PC-9 (cell line): ENCODE measurements at regions of chr14 and their contacts with region 1.

Region 1: DNA sequence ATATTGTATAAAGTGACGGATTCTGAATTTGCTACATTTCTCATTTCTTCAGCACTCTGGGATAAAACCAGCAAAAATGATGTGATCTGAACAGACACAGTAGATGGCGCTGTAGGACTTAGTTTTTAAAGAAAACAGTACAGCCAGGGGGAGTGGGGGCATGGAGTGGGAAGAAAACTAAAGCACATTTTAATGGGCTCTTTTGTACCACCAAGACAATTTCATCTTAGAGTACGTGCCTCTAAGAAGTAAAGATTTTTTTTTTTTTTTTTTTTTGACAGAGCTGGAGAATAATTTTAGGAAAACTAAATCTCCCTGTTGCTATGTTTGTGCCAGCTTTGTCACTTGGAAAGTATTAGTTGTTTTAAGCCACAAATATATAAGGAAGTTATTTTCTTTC is 124.4 kb downstream of the RAD51B start:
- DNase-seq: peak; percentile 54 to 67
- H3K4me3 ChIP-seq: no peak overlapping the region
- H3K27ac ChIP-seq: peak overlapping the region; percentile 37
- H3K4me1 ChIP-seq: peaks cover 43% of the 10 kb centered on the region
- H3K27me3 ChIP-seq: no peaks in the 10 kb centered on the region
- CTCF ChIP-seq: peak; percentile 91

Region 2: DNA sequence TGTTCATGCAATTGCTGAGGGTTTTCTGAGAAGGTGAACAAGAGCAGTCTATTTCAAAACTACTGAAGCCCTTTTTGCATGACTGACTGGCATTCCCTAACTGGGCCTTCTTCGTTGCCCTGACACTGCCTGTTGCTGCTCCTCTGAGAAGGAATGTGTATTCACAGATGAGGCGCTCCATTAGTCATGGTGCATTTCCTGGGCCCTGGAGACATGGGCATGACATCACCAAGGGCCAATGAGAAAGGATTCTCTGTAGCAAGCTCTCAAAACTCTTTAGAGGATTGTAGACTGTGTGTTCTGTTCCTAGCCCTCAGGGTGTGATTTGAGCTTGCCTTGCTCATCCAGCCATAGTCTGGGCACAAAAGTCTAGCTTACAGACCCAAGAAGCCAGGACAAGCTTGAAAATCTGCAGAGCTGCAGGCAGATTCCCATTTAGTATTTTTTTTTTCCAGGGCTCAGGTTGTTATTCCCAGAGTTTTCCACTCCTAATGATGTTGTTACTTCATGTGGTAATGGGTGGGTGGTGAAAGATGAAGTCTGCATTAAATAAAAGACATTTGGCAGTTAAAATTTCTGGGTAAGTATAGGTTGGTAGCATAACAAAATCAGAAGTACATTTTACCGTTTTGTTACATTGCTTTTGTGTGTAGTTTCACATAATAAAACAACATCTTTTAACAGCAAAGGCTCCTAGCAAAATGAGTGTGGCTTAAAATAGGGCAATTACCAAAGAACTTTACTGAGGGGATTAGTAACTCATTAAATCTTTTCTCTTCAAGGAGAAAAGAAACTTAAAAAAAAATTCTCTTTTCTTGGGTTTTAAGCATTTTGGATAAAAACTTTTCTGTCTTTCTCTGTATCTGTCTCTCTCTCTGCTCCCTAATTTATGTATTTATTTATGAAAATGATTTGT is 194.0 kb after region 1 on chr14:
- CTCF ChIA-PET with region 1: no interaction called
- POLR2A ChIA-PET with region 1: no interaction called
- intact Hi-C with region 1: loop called (anchors 1 kb)
- DNase-seq: peak; percentile 88 to 92
- H3K4me3 ChIP-seq: no peak overlapping the region
- H3K27ac ChIP-seq: peak overlapping the region; percentile 57
- H3K4me1 ChIP-seq: peaks cover 58% of the 10 kb centered on the region
- H3K27me3 ChIP-seq: no peaks in the 10 kb centered on the region
- CTCF ChIP-seq: no peak

Region 3: GRCh38 chr14:68278581-68279436 is 334.9 kb after region 1 on chr14:
- CTCF ChIA-PET with region 1: interaction called, 10 read pairs
- POLR2A ChIA-PET with region 1: no interaction called
- intact Hi-C with region 1: no loop called
- DNase-seq: peak in 1 of 2 experiments; percentile 15
- H3K4me3 ChIP-seq: no peak overlapping the region
- H3K27ac ChIP-seq: peak overlapping the region; percentile 51
- H3K4me1 ChIP-seq: peaks cover 21% of the 10 kb centered on the region
- H3K27me3 ChIP-seq: no peaks in the 10 kb centered on the region
- CTCF ChIP-seq: no peak

Region 4: DNA sequence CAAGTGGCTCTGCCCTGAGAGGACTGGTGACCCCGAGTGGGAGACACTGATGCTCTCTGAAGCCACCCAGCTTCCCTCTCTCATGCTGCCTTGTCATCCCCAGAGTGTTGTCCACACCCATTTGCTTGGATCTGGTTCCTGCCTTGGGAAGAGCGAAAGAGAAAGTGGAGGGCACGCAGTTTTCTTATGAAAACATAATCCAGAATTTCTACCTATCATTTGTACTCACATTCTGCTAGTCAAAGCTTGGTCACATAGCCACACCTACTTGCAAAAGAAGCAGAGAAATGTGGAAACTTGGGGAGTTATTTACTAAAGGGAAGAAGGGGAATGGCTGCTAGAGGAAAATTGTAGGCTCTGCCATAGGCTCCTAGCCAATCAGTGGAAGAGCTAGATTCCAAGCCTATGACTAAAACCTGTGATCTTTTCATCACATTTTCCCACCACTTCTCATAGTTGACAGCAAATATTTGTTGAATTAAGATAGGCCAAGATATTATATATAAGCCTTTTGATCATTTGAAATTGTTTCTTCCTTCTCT is 522.6 kb after region 1 on chr14:
- CTCF ChIA-PET with region 1: interaction called, 3 read pairs
- POLR2A ChIA-PET with region 1: no interaction called
- intact Hi-C with region 1: loop called (anchors 5 kb)
- DNase-seq: peak; percentile 65 to 100
- H3K4me3 ChIP-seq: peak overlapping the region; percentile 23; the same call in 1 of the 2 replicates
- H3K27ac ChIP-seq: peak overlapping the region; percentile 96
- H3K4me1 ChIP-seq: peaks cover 95% of the 10 kb centered on the region
- H3K27me3 ChIP-seq: no peaks in the 10 kb centered on the region
- CTCF ChIP-seq: no peak

Region 5: DNA sequence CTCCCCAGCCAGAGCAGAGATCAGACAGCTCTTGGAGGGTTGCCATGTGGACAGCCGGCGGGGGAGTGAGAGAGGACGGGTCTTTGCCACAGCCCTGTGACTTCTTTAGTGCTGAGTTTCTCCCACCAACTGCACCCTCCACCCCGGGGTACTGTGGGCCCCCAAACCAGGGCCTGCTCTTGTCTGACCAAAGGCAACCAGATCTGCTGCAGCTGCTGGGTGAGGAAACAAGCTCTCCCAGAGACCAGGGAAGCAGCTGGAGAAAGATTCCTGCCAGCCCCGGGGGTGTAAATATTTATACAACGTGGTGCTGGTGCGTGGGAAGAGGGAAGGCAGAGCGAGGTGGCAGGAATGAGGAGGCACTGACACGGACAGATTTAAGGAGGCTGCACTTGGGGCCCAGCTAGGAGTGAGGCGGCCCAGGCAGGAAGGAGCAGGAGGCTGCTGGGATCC is 863.2 kb after region 1 on chr14:
- CTCF ChIA-PET with region 1: no interaction called
- POLR2A ChIA-PET with region 1: no interaction called
- intact Hi-C with region 1: no loop called
- DNase-seq: no peak
- H3K4me3 ChIP-seq: no peak overlapping the region
- H3K27ac ChIP-seq: no peak overlapping the region
- H3K4me1 ChIP-seq: no peaks in the 10 kb centered on the region
- H3K27me3 ChIP-seq: no peaks in the 10 kb centered on the region
- CTCF ChIP-seq: no peak

Region 6: GRCh38 chr14:68824517-68825347 is 880.8 kb after region 1 on chr14:
- CTCF ChIA-PET with region 1: interaction called, 3 read pairs
- POLR2A ChIA-PET with region 1: no interaction called
- intact Hi-C with region 1: loop called (anchors 2 kb)
- DNase-seq: peak; percentile 68 to 85
- H3K4me3 ChIP-seq: no peak overlapping the region
- H3K27ac ChIP-seq: no peak overlapping the region
- H3K4me1 ChIP-seq: peaks cover 4% of the 10 kb centered on the region
- H3K27me3 ChIP-seq: no peaks in the 10 kb centered on the region
- CTCF ChIP-seq: peak; percentile 94